Left cardiac atrium (tissue), 4 donors: ENCODE measurements at regions of chr10 and their contacts with region 1.

Region 1: DNA sequence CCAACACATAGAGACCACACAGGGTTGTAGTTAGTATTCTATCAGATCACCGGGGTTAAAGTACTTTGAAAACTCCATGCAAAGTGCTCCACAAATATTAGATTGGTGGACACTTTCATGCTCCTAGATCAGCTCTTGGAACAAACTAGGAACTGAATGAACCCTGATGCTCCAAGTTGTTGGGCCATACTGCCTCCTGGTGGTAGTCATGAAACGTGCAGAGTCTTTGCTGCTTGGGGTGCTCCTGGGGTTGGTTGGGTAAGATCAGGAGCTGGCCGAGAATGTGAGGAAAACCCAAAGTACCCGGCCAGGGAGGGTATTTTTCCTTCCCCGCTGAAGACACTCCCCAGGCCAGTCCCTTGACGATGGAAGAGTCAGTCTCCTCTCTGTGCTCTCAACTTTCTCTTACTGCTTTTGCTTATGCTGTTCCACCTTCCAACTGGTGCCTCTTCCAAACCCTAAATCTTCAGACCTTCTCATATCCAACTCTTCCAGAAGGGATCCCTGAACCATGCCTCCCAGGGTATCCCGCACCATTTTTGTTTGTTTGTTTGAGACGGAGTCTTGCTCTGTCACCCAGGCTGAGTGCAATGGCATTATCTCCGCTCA is 920 bp upstream of the RPEL1 start:
- DNase-seq: peak; percentile 67
- ATAC-seq: peak; percentile 91 to 93

Region 2: GRCh38 chr10:102729029-102730026 is 515.4 kb before region 1 on chr10:
- intact Hi-C with region 1: loop called in 1 of 2 experiments (anchors 5 kb)
- DNase-seq: peak; percentile 91
- ATAC-seq: peak; percentile 94 to 97

Region 3: GRCh38 chr10:102917962-102918816 is 326.6 kb before region 1 on chr10 and contains the start of gene CNNM2:
- intact Hi-C with region 1: loop called (anchors 1 to 2 kb)
- DNase-seq: peak; percentile 100
- ATAC-seq: peak; percentile 97 to 98
- total RNA-seq, gene CNNM2: 3.7 to 3.9 TPM

Region 4: DNA sequence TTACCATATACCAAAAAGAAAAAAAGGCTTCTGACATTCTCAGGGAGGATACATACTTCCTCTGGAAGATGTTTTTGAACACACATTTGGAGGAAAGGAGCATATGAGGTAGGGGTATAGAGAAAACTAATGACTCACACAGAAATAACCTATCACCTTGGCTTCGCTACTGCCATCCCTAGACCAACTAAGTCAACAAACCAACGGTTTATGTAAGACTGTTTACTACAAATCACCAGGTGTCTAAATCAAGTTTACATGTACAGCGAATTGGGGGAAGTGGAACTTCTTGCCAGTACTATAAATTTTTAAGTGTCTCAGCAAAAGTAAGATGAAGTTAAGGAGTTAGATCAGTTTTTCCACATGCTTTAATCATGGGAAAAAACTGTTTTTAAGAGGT is 148.6 kb before region 1 on chr10:
- intact Hi-C with region 1: loop called in 1 of 2 experiments (anchors 10 kb)
- DNase-seq: no peak
- ATAC-seq: no peak

Region 5: GRCh38 chr10:103111031-103111917 is 133.5 kb before region 1 on chr10:
- intact Hi-C with region 1: loop called in 1 of 2 experiments (anchors 5 kb)
- DNase-seq: no peak
- ATAC-seq: peak; percentile 71 to 78

Region 6: DNA sequence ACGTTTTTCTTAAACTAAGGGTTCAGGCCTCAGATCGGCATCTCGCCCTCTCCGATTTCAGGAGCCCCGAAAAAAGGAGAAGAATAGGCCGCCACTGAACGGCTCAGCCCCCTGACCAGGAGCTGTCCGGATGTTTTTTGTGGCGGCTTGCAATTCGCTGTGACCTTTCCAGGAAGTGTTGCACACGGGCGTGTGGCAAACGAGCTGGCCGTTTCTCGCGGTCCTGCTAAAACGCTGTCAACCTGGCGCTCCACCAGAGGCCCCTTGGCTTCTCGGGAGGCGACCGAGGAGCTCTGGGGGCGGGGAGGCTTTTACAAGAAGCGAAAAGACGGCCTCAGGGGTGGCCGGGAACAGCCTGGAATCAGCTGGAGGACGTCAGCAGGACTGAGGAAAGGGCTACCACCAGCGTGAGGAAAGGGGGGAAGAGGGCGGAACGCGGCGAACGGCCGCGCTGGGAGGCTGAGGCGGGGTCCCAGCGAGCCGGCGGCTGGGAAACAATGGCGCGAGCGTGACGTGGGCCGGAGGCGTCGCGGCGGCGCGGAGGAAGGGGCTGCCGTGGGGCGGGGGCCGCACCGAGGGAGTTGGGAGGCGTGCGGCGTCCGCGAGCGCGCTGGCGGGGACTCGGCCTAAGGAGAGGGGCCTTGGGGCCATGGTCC is 52.2 kb before region 1 on chr10:
- intact Hi-C with region 1: loop called in 1 of 2 experiments (anchors 10 kb)
- DNase-seq: peak; percentile 90
- ATAC-seq: peak; percentile 76 to 80